Ovary (tissue), 10 donors: ENCODE measurements at regions of chr20 and their contacts with region 1.

Region 1: DNA sequence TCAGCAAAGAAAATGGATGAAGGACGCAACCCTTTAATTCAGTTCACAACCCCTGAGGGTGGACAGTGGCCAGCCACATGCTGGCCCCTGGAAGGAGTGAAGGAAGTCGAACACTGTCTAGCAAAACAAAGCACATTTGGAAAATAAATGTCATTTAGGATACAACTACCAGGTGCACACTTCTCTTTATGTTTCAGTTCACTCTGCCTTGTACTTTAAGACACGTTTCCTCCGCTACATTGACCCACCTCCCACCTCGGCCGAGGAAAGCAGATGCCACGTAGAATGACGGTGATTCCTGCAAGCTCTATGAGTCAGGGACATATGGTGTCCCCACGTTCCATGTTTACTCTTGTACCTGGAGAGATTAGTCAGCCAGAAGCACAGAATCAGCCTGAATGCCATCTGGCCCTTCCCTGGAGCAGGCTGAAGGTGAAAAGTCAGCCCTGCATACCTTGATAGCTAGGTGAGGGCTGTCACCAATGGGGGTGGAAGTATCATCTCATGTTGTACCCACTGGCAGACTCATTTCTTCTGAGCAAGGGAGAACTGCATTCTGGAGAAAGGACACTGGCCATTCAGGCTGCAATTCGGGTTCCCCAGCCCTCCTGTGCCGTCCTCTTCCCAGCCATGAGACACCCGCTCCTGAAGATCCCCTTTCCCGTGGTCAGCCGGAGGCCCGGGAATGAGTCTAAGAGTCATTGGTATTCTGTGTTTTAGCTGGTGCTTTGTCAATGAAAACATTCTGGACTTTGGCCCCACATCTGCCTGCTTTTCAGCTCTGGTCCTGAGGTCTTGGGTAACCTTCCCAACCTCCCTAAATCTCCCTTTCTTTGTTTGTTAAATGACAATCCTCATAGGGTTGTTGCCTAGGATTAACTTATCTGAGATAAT is 60.6 kb downstream of the FOXA2 start:
- DNase-seq: no peak
- H3K4me3 ChIP-seq: no peak overlapping the region
- H3K27ac ChIP-seq: no peak overlapping the region
- H3K4me1 ChIP-seq: no peaks in the 10 kb centered on the region
- H3K27me3 ChIP-seq: no peaks in the 10 kb centered on the region
- CTCF ChIP-seq: no peak
- EP300 ChIP-seq: no peak
- POLR2A ChIP-seq: no peak

Region 2: GRCh38 chr20:22243067-22243466 is 280.7 kb before region 1 on chr20:
- intact Hi-C with region 1: no loop called
- DNase-seq: no peak
- H3K4me3 ChIP-seq: no peak overlapping the region
- H3K27ac ChIP-seq: no peak overlapping the region
- H3K4me1 ChIP-seq: no peaks in the 10 kb centered on the region
- H3K27me3 ChIP-seq: no peaks in the 10 kb centered on the region
- CTCF ChIP-seq: no peak
- EP300 ChIP-seq: no peak
- POLR2A ChIP-seq: no peak

Region 3: GRCh38 chr20:22586645-22587310 is 63.0 kb after region 1 on chr20:
- intact Hi-C with region 1: loop called in 1 of 4 experiments (anchors 10 kb)
- DNase-seq: no peak
- H3K4me3 ChIP-seq: no peak overlapping the region
- H3K27ac ChIP-seq: no peak overlapping the region
- H3K4me1 ChIP-seq: no peaks in the 10 kb centered on the region
- H3K27me3 ChIP-seq: no peaks in the 10 kb centered on the region
- CTCF ChIP-seq: no peak
- EP300 ChIP-seq: no peak
- POLR2A ChIP-seq: no peak

Region 4: DNA sequence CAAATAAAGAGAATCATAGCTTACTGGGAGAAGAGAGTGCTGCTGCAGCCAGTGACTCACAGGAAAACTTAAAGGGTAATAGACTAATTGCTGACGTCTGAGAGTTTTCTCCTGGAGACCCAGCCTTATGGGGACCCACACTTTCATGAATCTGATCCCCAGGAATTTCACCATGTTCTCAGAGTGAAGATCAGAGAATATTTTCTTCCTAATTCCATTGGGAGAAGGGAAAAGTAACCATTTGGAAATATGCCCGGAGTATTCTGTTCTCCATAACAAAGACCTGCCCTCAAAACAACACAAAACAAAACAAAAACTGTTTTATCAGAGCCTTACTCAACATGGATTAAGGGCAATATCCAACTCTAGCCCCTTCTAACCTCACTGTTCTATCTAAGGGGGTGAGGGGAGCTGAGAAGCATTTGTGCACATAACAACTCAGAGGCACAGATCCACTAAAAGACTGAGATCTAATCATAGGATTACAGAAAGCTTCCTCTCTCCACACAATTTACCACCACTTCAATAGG is 343.1 kb after region 1 on chr20:
- intact Hi-C with region 1: no loop called
- DNase-seq: no peak
- H3K4me3 ChIP-seq: no peak overlapping the region
- H3K27ac ChIP-seq: no peak overlapping the region
- H3K4me1 ChIP-seq: no peaks in the 10 kb centered on the region
- H3K27me3 ChIP-seq: no peaks in the 10 kb centered on the region
- CTCF ChIP-seq: no peak
- EP300 ChIP-seq: no peak
- POLR2A ChIP-seq: no peak